H1 (cell line): ENCODE measurements at regions of chr3 and their contacts with region 1.

Region 1: GRCh38 chr3:133426721-133427120 is 26.9 kb downstream of the BFSP2 start:
- DNase-seq: no peak
- H3K4me3 ChIP-seq: no peak overlapping the region
- H3K27ac ChIP-seq: no peak overlapping the region
- H3K4me1 ChIP-seq: no peaks in the 10 kb centered on the region
- H3K27me3 ChIP-seq: no peaks in the 10 kb centered on the region
- CTCF ChIP-seq: no peak
- EP300 ChIP-seq: no peak
- POLR2A ChIP-seq: no peak
- RAD21 ChIP-seq: no peak

Region 2: GRCh38 chr3:133384331-133385027 is 42.2 kb before region 1 on chr3:
- CTCF ChIA-PET with region 1: interaction called, 11 read pairs
- POLR2A ChIA-PET with region 1: no interaction called
- DNase-seq: peak; percentile 58 to 80
- H3K4me3 ChIP-seq: no peak overlapping the region
- H3K27ac ChIP-seq: no peak overlapping the region
- H3K4me1 ChIP-seq: no peaks in the 10 kb centered on the region; a peak in 1 of 7 replicates
- H3K27me3 ChIP-seq: no peaks in the 10 kb centered on the region
- CTCF ChIP-seq: peak; percentile 86 to 97 (median 93)
- EP300 ChIP-seq: no peak
- POLR2A ChIP-seq: no peak
- RAD21 ChIP-seq: peak; percentile 97 to 98

Region 3: GRCh38 chr3:133413161-133414020 is 13.3 kb before region 1 on chr3:
- CTCF ChIA-PET with region 1: interaction called, 20 read pairs
- POLR2A ChIA-PET with region 1: no interaction called
- DNase-seq: no peak
- H3K4me3 ChIP-seq: no peak overlapping the region
- H3K27ac ChIP-seq: no peak overlapping the region
- H3K4me1 ChIP-seq: no peaks in the 10 kb centered on the region
- H3K27me3 ChIP-seq: no peaks in the 10 kb centered on the region
- CTCF ChIP-seq: no peak
- EP300 ChIP-seq: no peak
- POLR2A ChIP-seq: no peak
- RAD21 ChIP-seq: no peak